ENCODE measurements at regions of chr12 and their contacts with region 1.

Region 1: GRCh38 chr12:7638760-7639555 is 26.8 kb downstream of the APOBEC1 start:
- DNase-seq: peak; percentile 54 to 92 (median 71)
- ATAC-seq: peak; percentile 83
- H3K4me3 ChIP-seq: peak overlapping the region; percentile 46
- H3K4me3 Mint-ChIP-seq: peak overlapping the region; percentile 74
- H3K27ac ChIP-seq: peak overlapping the region; percentile 46 to 52
- H3K27ac Mint-ChIP-seq: peak overlapping the region; percentile 12
- H3K4me1 ChIP-seq: peaks cover 33% of the 10 kb centered on the region
- H3K4me1 Mint-ChIP-seq: peaks cover 25% of the 10 kb centered on the region
- H3K27me3 ChIP-seq: no peaks in the 10 kb centered on the region
- H3K27me3 Mint-ChIP-seq: peaks cover 9% of the 10 kb centered on the region
- CTCF ChIP-seq: peak; percentile 92

Region 2: GRCh38 chr12:7142056-7142644 is 496.8 kb before region 1 on chr12:
- CTCF ChIA-PET with region 1: no interaction called
- POLR2A ChIA-PET with region 1: no interaction called
- intact Hi-C with region 1: loop called (anchors 1 kb)
- DNase-seq: peak; percentile 20 to 70 (median 48)
- ATAC-seq: peak; percentile 90
- H3K4me3 ChIP-seq: no peak overlapping the region
- H3K4me3 Mint-ChIP-seq: no peak overlapping the region
- H3K27ac ChIP-seq: no peak overlapping the region
- H3K27ac Mint-ChIP-seq: no peak overlapping the region
- H3K4me1 ChIP-seq: no peaks in the 10 kb centered on the region
- H3K4me1 Mint-ChIP-seq: no peaks in the 10 kb centered on the region
- H3K27me3 ChIP-seq: no peaks in the 10 kb centered on the region
- H3K27me3 Mint-ChIP-seq: no peaks in the 10 kb centered on the region
- CTCF ChIP-seq: peak; percentile 48

Region 3: DNA sequence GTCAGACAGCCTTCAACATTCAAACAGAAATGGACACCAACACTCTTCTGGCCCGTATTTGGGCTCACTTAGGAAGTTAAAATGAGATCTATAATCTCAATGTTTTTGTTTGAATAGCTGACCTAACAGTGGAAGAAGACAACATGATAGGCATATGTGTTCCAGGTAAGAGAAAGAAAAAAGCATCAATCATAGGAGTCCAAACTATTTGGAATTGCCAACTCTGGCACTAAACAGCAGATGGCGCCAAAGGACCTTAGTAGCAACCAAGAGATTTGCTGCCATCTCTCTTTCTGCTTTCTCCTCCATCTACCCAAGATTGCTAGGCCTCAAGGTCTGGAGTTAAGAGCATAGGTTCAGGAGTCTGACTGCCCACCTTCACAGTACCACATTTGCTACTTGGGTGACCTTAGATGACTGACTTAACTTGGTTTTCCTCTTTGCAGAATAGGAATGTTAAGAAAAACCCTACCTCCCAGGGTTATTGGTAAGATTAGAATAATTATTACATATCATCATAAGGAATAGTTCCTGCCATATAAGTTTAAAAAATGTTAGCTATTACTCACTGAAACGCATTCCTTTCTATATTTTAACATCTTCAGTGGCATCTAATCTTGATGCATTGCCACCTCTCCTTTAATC is 419.2 kb before region 1 on chr12:
- CTCF ChIA-PET with region 1: no interaction called
- POLR2A ChIA-PET with region 1: interaction called, 3 read pairs
- intact Hi-C with region 1: loop called (anchors 1 kb)
- DNase-seq: peak; percentile 51 to 85 (median 67)
- ATAC-seq: peak; percentile 61
- H3K4me3 ChIP-seq: no peak overlapping the region
- H3K4me3 Mint-ChIP-seq: no peak overlapping the region
- H3K27ac ChIP-seq: no peak overlapping the region
- H3K27ac Mint-ChIP-seq: no peak overlapping the region
- H3K4me1 ChIP-seq: no peaks in the 10 kb centered on the region
- H3K4me1 Mint-ChIP-seq: no peaks in the 10 kb centered on the region
- H3K27me3 ChIP-seq: no peaks in the 10 kb centered on the region
- H3K27me3 Mint-ChIP-seq: no peaks in the 10 kb centered on the region
- CTCF ChIP-seq: peak; percentile 81

Region 4: GRCh38 chr12:7460375-7461259 is 178.3 kb before region 1 on chr12:
- CTCF ChIA-PET with region 1: no interaction called
- POLR2A ChIA-PET with region 1: no interaction called
- intact Hi-C with region 1: loop called (anchors 2 to 5 kb)
- DNase-seq: peak; percentile 19 to 73 (median 37)
- ATAC-seq: peak; percentile 84
- H3K4me3 ChIP-seq: no peak overlapping the region
- H3K4me3 Mint-ChIP-seq: no peak overlapping the region
- H3K27ac ChIP-seq: no peak overlapping the region
- H3K27ac Mint-ChIP-seq: no peak overlapping the region
- H3K4me1 ChIP-seq: no peaks in the 10 kb centered on the region
- H3K4me1 Mint-ChIP-seq: no peaks in the 10 kb centered on the region
- H3K27me3 ChIP-seq: no peaks in the 10 kb centered on the region
- H3K27me3 Mint-ChIP-seq: peaks cover 5% of the 10 kb centered on the region
- CTCF ChIP-seq: peak; percentile 82

Region 5: DNA sequence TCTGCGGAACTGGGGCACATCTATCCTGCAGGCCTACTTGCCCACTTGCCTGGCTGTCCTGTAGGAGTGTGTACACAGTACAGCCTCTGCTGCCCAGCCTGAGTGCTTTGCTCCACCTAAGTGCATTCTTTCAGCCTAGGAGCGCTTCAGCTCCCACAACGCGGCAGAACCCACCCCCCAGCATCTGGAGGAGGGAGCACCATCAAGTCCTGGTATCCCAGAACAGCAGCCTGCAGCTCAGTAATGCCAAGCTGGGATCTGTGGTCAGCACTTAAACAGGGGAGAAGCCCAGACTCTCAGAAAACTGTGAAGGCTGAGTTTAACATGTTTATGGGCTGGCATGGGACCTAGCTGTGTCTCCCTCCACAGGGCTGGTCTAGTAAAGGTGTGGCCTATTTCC is 55.4 kb before region 1 on chr12:
- CTCF ChIA-PET with region 1: no interaction called
- POLR2A ChIA-PET with region 1: no interaction called
- intact Hi-C with region 1: loop called (anchors 2 kb)
- DNase-seq: no peak
- ATAC-seq: no peak
- H3K4me3 ChIP-seq: no peak overlapping the region
- H3K4me3 Mint-ChIP-seq: no peak overlapping the region
- H3K27ac ChIP-seq: no peak overlapping the region
- H3K27ac Mint-ChIP-seq: no peak overlapping the region
- H3K4me1 ChIP-seq: no peaks in the 10 kb centered on the region
- H3K4me1 Mint-ChIP-seq: no peaks in the 10 kb centered on the region
- H3K27me3 ChIP-seq: peaks cover 0 to 16% of the 10 kb centered on the region in 2 experiments
- H3K27me3 Mint-ChIP-seq: peaks cover 50% of the 10 kb centered on the region
- CTCF ChIP-seq: no peak

Region 6: DNA sequence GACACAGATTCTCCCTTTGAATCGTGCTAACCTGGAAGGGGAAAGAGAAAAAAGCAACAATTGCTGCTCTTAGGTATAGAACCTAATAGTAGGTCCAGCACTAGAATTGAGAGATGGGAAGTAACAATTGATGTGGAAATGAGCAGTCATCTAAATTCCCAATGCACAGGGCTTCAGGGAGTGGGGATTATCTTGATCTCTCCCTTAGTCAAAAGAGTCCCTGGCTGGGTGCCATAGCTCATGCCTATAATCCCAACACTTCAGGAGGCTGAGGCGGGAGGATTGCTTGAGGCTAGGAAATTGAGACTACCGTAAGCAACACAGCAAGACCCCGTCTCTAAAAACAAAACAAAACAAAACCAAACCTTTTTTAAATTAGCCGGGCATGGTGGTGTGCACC is 22.8 kb after region 1 on chr12:
- CTCF ChIA-PET with region 1: no interaction called
- POLR2A ChIA-PET with region 1: no interaction called
- intact Hi-C with region 1: no loop called
- DNase-seq: no peak
- ATAC-seq: no peak
- H3K4me3 ChIP-seq: no peak overlapping the region
- H3K4me3 Mint-ChIP-seq: no peak overlapping the region
- H3K27ac ChIP-seq: no peak overlapping the region
- H3K27ac Mint-ChIP-seq: no peak overlapping the region
- H3K4me1 ChIP-seq: no peaks in the 10 kb centered on the region
- H3K4me1 Mint-ChIP-seq: no peaks in the 10 kb centered on the region
- H3K27me3 ChIP-seq: no peaks in the 10 kb centered on the region
- H3K27me3 Mint-ChIP-seq: no peaks in the 10 kb centered on the region
- CTCF ChIP-seq: no peak